ENCODE measurements at regions of chr15 and their contacts with region 1.

Region 1: DNA sequence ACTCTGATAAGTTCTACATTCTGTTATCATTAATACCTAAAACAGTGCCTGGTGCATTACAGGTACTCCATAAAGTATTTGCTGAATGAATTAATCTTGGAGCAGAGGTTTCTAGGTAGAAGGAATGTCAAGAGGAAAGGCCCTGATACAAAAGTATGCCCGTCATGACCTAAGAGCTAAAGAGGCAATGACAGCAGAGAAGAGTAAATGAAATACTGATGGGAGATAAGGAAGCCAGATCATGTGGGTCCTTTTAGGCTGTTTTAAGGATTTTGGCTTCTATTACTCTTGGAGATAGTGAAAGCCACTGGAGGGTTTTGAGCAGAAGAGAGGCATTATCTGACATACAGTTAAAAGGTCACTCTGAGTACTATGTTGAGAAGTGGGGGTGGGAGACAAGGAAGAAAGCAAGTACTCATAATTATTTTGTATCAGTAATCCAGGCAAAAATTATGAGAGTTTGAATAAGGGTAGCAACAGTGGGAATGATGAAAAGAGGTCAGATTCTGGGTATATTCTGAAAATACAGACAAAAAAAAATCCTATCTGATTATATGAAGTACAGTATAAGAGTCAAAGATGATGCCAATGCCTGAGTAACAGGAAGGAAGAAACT is 48.3 kb downstream of the DENND4A start:
- DNase-seq: no peak
- H3K4me3 ChIP-seq: no peak overlapping the region
- H3K27ac ChIP-seq: no peak overlapping the region
- H3K27me3 ChIP-seq: no peaks in the 10 kb centered on the region
- CTCF ChIP-seq: no peak

Region 2: DNA sequence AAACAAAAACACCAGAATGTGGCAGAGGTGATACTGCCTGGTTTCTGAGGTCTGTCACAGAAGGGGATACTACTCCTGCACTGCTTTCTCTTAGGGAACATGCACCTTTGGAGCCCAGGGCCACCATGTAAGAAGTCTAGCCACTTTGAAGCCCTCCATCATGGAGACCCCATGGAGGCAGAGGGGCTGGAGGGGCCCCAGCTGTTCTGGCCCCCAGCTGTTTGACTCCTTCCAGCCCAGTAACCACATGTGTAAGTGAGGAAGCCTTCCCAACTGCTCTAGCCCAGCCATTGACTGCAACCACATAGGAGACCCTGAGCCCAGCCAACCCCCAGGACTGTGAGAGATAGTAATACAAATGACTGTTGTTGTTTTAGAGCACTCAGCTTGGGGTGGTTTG is 312.0 kb before region 1 on chr15:
- intact Hi-C with region 1: no loop called
- DNase-seq: no peak
- H3K4me3 ChIP-seq: no peak overlapping the region
- H3K27ac ChIP-seq: no peak overlapping the region
- H3K27me3 ChIP-seq: no peaks in the 10 kb centered on the region
- CTCF ChIP-seq: no peak

Region 3: GRCh38 chr15:65638681-65639089 is 105.1 kb before region 1 on chr15:
- intact Hi-C with region 1: no loop called
- DNase-seq: peak in 2 of 10 donors; percentile 17 to 33
- H3K4me3 ChIP-seq: peak overlapping the region in 53 of 59 donors; percentile 3 to 64 (median 39)
- H3K27ac ChIP-seq: no peak overlapping the region
- H3K27me3 ChIP-seq: no peaks in the 10 kb centered on the region
- CTCF ChIP-seq: peak; percentile 76 to 93 (median 85)

Region 4: DNA sequence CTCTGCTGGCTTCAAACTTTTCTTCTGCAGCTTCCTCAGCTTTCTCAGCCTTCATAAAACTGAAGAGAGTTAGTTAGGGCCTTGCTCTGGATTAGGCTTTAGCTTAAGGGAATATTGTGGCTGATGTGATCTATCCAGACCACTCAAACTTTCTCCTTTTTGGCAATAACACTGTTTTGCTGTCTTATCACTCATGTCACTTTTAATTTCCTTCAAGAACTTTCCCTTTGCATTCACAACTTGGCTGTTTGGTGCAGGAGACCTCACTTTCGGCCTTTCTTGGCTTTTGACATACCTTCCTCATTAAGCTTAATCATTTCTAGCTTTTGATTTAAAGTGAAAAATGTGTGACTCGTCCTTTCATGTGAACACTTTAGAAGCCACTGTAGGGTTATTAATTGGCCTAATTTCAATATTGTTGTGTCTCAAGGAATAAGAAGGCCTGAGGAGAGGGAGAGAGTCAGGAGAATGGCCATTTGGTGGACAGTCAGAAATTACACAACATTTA is 61.3 kb before region 1 on chr15:
- intact Hi-C with region 1: no loop called
- DNase-seq: no peak
- H3K4me3 ChIP-seq: no peak overlapping the region
- H3K27ac ChIP-seq: no peak overlapping the region
- H3K27me3 ChIP-seq: no peaks in the 10 kb centered on the region
- CTCF ChIP-seq: no peak

Region 5: GRCh38 chr15:65804252-65804931 is 60.6 kb after region 1 on chr15:
- intact Hi-C with region 1: loop called in 1 of 2 experiments (anchors 10 kb)
- DNase-seq: no peak
- H3K4me3 ChIP-seq: no peak overlapping the region
- H3K27ac ChIP-seq: peak overlapping the region in 13 of 59 donors; percentile 9 to 48 (median 30)
- H3K27me3 ChIP-seq: no peaks in the 10 kb centered on the region
- CTCF ChIP-seq: no peak

Measured in dorsolateral prefrontal cortex (tissue), 120 donors.